Breast epithelium (tissue), 4 donors: ENCODE measurements at regions of chr3 and their contacts with region 1.

Region 1: GRCh38 chr3:160722331-160722730 is 33.7 kb upstream of the PPM1L start:
- DNase-seq: no peak
- H3K4me3 ChIP-seq: no peak overlapping the region
- H3K27ac ChIP-seq: no peak overlapping the region
- H3K4me1 ChIP-seq: no peaks in the 10 kb centered on the region
- H3K27me3 ChIP-seq: no peaks in the 10 kb centered on the region
- CTCF ChIP-seq: no peak
- POLR2A ChIP-seq: no peak

Region 2: DNA sequence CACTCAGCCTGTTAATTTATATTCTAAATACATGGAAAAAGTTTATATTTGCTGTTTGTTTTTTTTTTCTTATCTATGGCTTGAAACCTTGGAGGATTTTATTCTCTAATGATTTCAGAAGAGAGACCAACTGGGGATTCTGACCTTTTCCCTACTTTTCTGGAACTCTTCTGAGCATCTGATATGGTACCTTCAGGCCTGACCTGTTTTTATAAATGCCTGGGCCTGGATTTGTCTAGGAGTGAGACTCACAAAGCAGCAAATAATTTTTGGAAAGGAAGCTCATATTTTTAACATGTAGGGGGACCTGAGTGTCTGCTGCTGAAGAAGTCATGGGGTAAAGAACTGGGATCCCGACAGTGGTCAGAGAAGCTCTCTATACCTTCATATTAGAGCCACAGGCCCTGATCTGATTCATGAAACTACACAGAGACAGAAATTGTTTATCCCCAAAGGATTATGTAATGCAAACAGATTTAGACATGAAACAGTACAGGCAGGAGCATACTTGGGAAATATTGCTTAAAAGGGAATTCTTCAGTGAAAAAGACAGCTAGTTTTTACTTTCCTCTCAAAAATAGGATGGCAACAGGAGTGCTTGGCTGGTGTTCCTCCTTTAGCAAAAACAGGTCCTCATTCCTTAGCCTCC is 49.6 kb after region 1 on chr3:
- intact Hi-C with region 1: loop called (anchors 2 kb)
- DNase-seq: no peak
- H3K4me3 ChIP-seq: no peak overlapping the region
- H3K27ac ChIP-seq: no peak overlapping the region
- H3K4me1 ChIP-seq: no peaks in the 10 kb centered on the region
- H3K27me3 ChIP-seq: no peaks in the 10 kb centered on the region
- CTCF ChIP-seq: no peak
- POLR2A ChIP-seq: no peak

Region 3: GRCh38 chr3:160796813-160797164 is 74.5 kb after region 1 on chr3:
- intact Hi-C with region 1: no loop called
- DNase-seq: no peak
- H3K4me3 ChIP-seq: no peak overlapping the region
- H3K27ac ChIP-seq: peak overlapping the region in 1 of 2 donors; percentile 40
- H3K4me1 ChIP-seq: no peaks in the 10 kb centered on the region
- H3K27me3 ChIP-seq: no peaks in the 10 kb centered on the region
- CTCF ChIP-seq: no peak
- POLR2A ChIP-seq: no peak